Activated CD8-positive, alpha-beta T cell treated with anti-CD3 and anti-CD28 coated beads for 36 hours (primary cell): ENCODE measurements at regions of chr2 and their contacts with region 1.

Region 1: DNA sequence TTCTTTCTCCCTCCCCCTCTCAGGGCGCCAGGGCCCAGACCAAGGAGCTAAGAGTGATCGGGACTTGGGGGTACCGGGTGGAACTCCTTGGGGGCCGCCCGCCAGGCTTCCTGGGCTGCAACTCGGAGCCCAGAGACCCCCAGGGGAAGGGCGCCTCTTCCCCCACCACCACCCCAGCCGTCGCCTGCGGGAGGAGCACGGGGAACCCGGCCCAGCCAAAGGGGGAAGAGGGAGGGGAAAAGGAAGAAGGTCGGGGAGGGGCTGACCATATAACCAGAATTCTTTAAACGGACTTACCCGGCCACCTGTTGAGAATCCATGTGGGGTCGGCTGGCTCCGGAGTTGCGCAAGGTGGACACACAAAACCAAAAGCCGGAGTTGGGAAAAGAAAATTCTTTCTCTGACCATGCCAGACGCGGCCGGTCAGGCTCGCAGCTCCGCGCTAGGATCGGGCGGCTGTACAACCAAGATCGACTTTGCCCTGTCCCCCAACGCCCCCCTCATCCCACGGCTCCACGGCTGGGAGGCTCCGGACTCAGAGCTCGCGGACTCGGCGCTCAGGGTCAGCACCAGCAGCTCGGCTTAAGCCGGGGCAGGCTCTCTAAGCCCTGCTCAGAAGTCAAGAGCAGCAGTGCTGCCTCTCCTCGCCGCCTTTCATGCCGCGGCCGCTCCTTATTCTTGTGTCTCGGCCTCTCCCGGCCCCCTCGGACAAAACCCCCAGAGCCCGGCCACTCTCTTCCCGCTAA is 6.3 kb upstream of the SIX3 start:
- DNase-seq: no peak
- ATAC-seq: no peak
- H3K4me3 Mint-ChIP-seq: no peak overlapping the region
- H3K27ac Mint-ChIP-seq: no peak overlapping the region
- H3K4me1 Mint-ChIP-seq: peaks cover 37% of the 10 kb centered on the region
- H3K27me3 Mint-ChIP-seq: peaks cover 82% of the 10 kb centered on the region
- CTCF ChIP-seq: no peak

Region 2: DNA sequence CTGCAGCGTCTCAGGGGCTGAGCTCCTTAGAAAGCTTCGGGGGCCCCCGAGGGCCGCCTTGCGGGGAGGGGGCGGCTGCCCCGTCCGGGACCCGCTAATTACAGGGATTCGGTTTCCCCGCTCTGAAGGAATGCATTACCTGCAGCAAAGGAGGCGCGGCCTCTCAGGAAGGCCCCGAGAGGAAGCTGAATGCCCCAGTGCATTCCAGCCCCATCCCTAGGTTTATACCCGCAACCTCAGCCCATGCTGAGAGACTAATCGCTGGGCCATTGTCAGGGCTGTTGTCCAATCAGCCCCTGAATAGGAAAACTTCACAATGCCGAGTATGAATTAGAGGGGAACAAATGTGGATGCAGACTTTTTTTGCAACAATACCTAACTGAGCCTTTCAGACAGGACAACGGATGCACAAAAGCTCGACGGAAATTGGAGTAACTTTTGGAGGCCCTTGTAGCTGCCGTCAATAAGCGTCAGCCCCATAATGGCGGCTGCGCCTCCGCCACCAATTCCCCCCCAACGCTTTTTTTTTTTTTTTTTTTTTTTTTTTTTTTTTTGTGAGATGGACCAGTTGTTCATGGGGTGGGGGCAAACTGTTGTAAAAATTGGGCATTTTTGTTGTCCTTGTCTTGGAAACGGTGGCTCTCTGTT is 132.3 kb before region 1 on chr2:
- CTCF ChIA-PET with region 1: interaction called, 3 read pairs
- POLR2A ChIA-PET with region 1: no interaction called
- intact Hi-C with region 1: loop called (anchors 5 kb)
- DNase-seq: no peak
- ATAC-seq: no peak
- H3K4me3 Mint-ChIP-seq: no peak overlapping the region
- H3K27ac Mint-ChIP-seq: no peak overlapping the region
- H3K4me1 Mint-ChIP-seq: peaks cover 8% of the 10 kb centered on the region
- H3K27me3 Mint-ChIP-seq: peaks cover 81% of the 10 kb centered on the region
- CTCF ChIP-seq: no peak

Region 3: GRCh38 chr2:44918095-44918775 is 16.9 kb before region 1 on chr2:
- CTCF ChIA-PET with region 1: no interaction called
- POLR2A ChIA-PET with region 1: no interaction called
- intact Hi-C with region 1: no loop called
- DNase-seq: no peak
- ATAC-seq: no peak
- H3K4me3 Mint-ChIP-seq: no peak overlapping the region
- H3K27ac Mint-ChIP-seq: no peak overlapping the region
- H3K4me1 Mint-ChIP-seq: no peaks in the 10 kb centered on the region
- H3K27me3 Mint-ChIP-seq: peaks cover 41% of the 10 kb centered on the region
- CTCF ChIP-seq: no peak

Region 4: GRCh38 chr2:45000921-45001868 is 66.0 kb after region 1 on chr2:
- CTCF ChIA-PET with region 1: no interaction called
- POLR2A ChIA-PET with region 1: no interaction called
- intact Hi-C with region 1: loop called (anchors 5 kb)
- DNase-seq: no peak
- ATAC-seq: no peak
- H3K4me3 Mint-ChIP-seq: peak overlapping the region; percentile 44
- H3K27ac Mint-ChIP-seq: no peak overlapping the region
- H3K4me1 Mint-ChIP-seq: peaks cover 12% of the 10 kb centered on the region
- H3K27me3 Mint-ChIP-seq: peaks cover 76% of the 10 kb centered on the region
- CTCF ChIP-seq: no peak